ENCODE measurements at regions of chr19 and their contacts with region 1.

Region 1: GRCh38 chr19:41998246-41999020 is 4.4 kb upstream of the ATP1A3 start:
- DNase-seq: no peak
- ATAC-seq: peak in 1 of 2 donors; percentile 29
- H3K4me3 ChIP-seq: no peak overlapping the region
- H3K27ac ChIP-seq: no peak overlapping the region
- H3K4me1 ChIP-seq: peaks cover 0 to 8% of the 10 kb centered on the region in 2 donors
- H3K27me3 ChIP-seq: peaks cover 61 to 76% (median 61%) of the 10 kb centered on the region in 3 donors
- CTCF ChIP-seq: peak; percentile 42 to 54 (median 48)
- POLR2A ChIP-seq: no peak

Region 2: DNA sequence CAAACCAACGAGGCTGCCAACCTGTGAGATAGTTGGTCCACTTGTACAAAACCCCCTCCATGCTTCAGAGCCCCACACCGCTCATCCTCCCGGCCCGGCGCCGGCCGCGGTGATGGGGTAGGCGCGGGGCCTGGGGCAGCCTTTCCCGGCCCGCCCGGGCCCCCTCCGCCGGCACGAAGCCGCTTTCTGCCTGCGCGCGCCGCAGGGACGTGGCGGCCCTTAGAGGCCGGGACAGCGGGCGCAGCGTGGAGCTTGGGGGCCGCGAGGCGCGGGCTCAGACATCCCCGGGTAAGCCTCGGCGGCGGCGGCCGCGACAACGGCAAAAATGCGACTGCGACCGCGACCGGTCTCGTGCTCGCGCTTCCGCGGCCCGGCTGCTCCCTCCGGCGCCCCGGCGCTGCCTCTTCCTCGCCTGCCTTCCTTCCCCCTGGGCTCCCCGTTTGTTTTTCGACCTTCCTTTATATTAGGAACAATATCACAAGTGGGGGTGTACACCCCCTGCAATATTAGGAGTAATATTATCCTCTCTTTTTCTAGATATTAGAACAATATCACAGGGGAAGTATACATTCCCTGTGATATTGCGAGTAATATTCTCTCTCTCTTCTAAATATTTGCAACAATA is 476.4 kb before region 1 on chr19:
- in situ Hi-C with region 1: no loop called
- intact Hi-C with region 1: no loop called
- DNase-seq: no peak
- ATAC-seq: peak in 1 of 2 donors; percentile 24
- H3K4me3 ChIP-seq: peak overlapping the region in 3 of 4 donors; percentile 25 to 32 (median 32)
- H3K27ac ChIP-seq: peak overlapping the region in 1 of 4 donors; percentile 14
- H3K4me1 ChIP-seq: peaks cover 3 to 4% of the 10 kb centered on the region in 2 donors
- H3K27me3 ChIP-seq: peaks cover 0 to 56% (median 44%) of the 10 kb centered on the region in 3 donors
- CTCF ChIP-seq: no peak
- POLR2A ChIP-seq: no peak

Region 3: GRCh38 chr19:42032431-42032830 is 34.0 kb after region 1 on chr19:
- in situ Hi-C with region 1: no loop called
- intact Hi-C with region 1: loop called (anchors 2 kb)
- DNase-seq: no peak
- ATAC-seq: no peak
- H3K4me3 ChIP-seq: no peak overlapping the region
- H3K27ac ChIP-seq: no peak overlapping the region
- H3K4me1 ChIP-seq: no peaks in the 10 kb centered on the region
- H3K27me3 ChIP-seq: peaks cover 0 to 1% (median 0%) of the 10 kb centered on the region in 3 donors
- CTCF ChIP-seq: no peak
- POLR2A ChIP-seq: no peak

Region 4: GRCh38 chr19:42092350-42092749 is 93.9 kb after region 1 on chr19:
- in situ Hi-C with region 1: no loop called
- intact Hi-C with region 1: loop called (anchors 1 kb)
- DNase-seq: no peak
- ATAC-seq: peak in 1 of 2 donors; percentile 51
- H3K4me3 ChIP-seq: no peak overlapping the region
- H3K27ac ChIP-seq: no peak overlapping the region
- H3K4me1 ChIP-seq: no peaks in the 10 kb centered on the region
- H3K27me3 ChIP-seq: peaks cover 10 to 14% (median 11%) of the 10 kb centered on the region in 3 donors
- CTCF ChIP-seq: peak in 4 of 5 experiments; percentile 5 to 50 (median 44)
- POLR2A ChIP-seq: no peak

Region 5: DNA sequence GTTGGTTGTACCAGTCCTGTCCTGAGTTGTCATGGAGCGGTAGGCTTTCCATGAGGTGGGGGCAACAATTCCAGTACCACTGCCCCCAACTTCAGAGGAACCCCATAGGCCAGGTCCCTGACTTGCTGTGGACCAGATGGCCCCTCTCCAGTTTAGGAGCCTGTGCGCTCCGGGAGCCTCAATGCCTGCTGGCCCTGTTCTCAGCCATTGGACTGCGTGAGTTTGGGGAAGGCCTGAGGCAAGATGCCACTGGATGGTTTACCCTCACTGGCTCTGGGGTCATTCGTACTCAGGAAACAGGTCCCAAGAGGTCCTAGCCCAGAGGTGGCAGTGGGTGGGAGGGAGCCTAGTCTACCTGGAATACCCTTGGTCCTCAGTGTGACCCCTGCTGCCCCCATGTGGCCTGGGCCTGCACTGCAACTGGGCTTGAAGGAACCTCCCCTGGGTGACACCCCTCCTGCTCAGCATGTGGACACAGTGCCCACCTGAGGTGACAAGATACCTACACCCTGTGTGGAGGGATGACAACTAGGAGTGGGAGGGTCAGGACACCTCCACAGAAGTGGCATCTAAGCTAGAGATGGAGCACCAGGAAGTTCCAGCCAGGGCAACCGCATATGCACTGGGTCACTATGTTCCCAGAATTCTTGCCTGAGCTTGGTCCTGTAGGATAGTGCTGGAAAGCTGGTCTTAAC is 297.5 kb after region 1 on chr19:
- in situ Hi-C with region 1: no loop called
- intact Hi-C with region 1: no loop called
- DNase-seq: peak; percentile 55 to 74
- ATAC-seq: peak; percentile 64 to 84
- H3K4me3 ChIP-seq: no peak overlapping the region
- H3K27ac ChIP-seq: no peak overlapping the region
- H3K4me1 ChIP-seq: no peaks in the 10 kb centered on the region
- H3K27me3 ChIP-seq: no peaks in the 10 kb centered on the region
- CTCF ChIP-seq: peak; percentile 84 to 98 (median 92)
- POLR2A ChIP-seq: no peak